ENCODE measurements at regions of chr1 and their contacts with region 1.

Region 1: GRCh38 chr1:194004146-194004545 is 817.7 kb upstream of the B3GALT2 start:
- DNase-seq: no peak
- H3K4me3 ChIP-seq: no peak overlapping the region
- CTCF ChIP-seq: no peak
- POLR2A ChIP-seq: no peak

Region 2: GRCh38 chr1:192580351-192580962 is 1423.7 kb before region 1 on chr1:
- intact Hi-C with region 1: loop called (anchors 10 kb)
- DNase-seq: no peak
- H3K4me3 ChIP-seq: no peak overlapping the region
- CTCF ChIP-seq: no peak
- POLR2A ChIP-seq: no peak

Region 3: DNA sequence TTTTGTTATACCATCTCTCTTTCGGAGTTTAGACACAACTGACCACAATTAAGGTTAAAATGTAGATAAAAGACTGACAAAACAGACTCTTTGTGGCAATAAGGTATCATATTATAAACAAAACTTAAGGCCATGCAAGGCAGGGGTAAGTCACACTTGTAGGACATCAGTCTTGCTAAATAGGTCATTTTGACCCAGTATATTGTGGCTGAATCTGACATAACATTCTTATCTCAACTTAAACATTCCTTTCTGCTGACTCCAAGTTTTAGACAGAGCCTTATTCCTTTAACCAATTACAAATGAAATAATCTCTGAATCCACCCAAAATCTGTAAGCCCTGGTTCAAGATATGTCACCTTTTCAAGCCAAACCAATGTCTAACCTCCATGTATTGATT is 84.3 kb before region 1 on chr1:
- intact Hi-C with region 1: no loop called
- DNase-seq: no peak
- H3K4me3 ChIP-seq: no peak overlapping the region
- CTCF ChIP-seq: no peak
- POLR2A ChIP-seq: no peak

Measured in lower leg skin (tissue), 4 donors.